ENCODE measurements at regions of chr15 and their contacts with region 1.

Region 1: DNA sequence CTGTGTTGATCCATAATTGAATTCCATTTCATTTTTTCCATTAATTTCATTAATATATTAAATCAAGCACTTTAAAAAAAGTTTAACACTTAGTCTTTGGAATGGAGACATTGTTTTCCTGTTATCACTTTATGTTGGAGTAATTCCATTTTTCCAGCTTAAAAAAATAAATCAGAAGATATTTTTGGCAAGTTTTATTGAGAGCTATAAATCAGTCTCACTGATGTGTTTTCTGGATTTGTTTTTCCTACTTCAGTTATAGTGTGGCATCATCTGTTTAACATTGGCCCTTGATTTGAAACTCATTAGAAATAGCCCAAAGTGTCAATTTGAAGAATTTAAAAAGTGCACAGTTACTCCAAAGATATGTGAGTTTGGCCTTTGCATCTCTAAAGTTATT is 53.1 kb downstream of the MAP2K5 start:
- DNase-seq: no peak
- H3K4me3 ChIP-seq: no peak overlapping the region
- H3K27ac ChIP-seq: no peak overlapping the region
- H3K4me1 ChIP-seq: no peaks in the 10 kb centered on the region
- H3K27me3 ChIP-seq: no peaks in the 10 kb centered on the region
- CTCF ChIP-seq: no peak
- EP300 ChIP-seq: no peak
- POLR2A ChIP-seq: no peak

Region 2: DNA sequence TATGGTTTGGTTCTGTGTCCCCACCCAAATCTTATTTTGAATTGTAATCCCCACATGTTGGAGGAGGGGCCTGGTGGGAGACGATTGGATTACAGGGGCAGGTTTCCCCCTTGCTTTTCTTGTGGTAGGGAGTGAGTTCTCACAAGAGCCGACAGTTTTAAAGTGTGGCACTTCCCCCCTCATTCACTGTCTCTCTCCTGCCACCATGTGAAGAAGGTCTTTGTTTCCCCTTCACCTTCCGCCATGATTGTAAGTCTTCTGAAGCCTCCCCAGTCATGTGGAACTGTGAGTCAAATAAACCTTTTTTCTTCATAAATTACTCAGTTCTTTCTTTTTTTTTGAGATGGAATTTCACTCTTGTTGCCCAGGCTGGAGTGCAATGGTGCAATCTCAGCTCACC is 216.0 kb before region 1 on chr15:
- in situ Hi-C with region 1: no loop called
- intact Hi-C with region 1: loop called (anchors 5 kb)
- DNase-seq: no peak
- H3K4me3 ChIP-seq: no peak overlapping the region
- H3K27ac ChIP-seq: no peak overlapping the region
- H3K4me1 ChIP-seq: no peaks in the 10 kb centered on the region
- H3K27me3 ChIP-seq: no peaks in the 10 kb centered on the region
- CTCF ChIP-seq: no peak
- EP300 ChIP-seq: no peak
- POLR2A ChIP-seq: no peak